Naive thymus-derived CD4-positive, alpha-beta T cell (primary cell): ENCODE measurements at regions of chr7 and their contacts with region 1.

Region 1: DNA sequence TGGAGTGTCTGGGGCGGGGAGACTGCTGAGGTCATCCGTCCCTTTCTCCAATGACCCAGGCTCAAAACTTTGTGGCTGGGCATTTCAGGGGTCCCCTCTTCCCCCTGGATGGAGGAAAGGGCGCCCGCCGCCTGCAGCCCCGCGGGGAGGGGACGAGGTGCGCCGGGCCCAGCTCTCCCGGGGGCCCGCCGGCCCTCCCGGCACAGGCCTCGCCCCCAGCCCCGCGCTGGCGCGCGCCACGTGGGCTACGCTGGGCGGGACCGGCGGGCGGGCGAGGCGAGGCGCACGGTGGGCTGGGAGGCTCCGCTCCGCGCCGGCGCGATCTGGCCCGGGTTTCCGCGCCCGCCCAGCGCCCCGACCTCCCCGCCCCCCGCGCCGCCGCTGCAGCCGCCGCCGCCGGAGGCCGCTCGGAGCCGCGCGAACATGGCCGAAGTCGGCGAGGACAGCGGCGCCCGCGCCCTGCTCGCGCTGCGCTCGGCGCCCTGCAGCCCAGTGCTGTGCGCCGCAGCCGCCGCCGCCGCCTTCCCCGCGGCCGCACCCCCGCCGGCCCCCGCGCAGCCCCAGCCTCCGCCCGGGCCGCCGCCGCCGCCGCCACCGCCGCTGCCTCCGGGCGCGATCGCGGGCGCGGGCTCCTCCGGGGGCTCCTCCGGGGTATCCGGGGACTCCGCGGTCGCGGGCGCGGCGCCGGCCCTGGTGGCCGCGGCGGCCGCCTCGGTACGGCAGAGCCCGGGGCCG is at the start of gene FOXK1:
- DNase-seq: peak; percentile 69 to 87 (median 79)
- ATAC-seq: peak; percentile 92
- H3K4me3 ChIP-seq: peak within 1 kb of the TSS; percentile 75
- H3K4me3 Mint-ChIP-seq: peak within 1 kb of the TSS; percentile 90 to 100 (median 97)
- H3K27ac ChIP-seq: peak within 1 kb of the TSS; percentile 92
- H3K27ac Mint-ChIP-seq: peak within 1 kb of the TSS; percentile 68 to 99 (median 97)
- H3K4me1 ChIP-seq: peaks cover 13 to 28% of the 10 kb centered on the region in 2 donors
- H3K4me1 Mint-ChIP-seq: peaks cover 24 to 41% (median 31%) of the 10 kb centered on the region in 7 donors
- H3K27me3 ChIP-seq: no peaks in the 10 kb centered on the region
- H3K27me3 Mint-ChIP-seq: no peaks in the 10 kb centered on the region
- total RNA-seq, gene FOXK1: 37.7 to 69.0 (median 56.9) TPM

Region 2: DNA sequence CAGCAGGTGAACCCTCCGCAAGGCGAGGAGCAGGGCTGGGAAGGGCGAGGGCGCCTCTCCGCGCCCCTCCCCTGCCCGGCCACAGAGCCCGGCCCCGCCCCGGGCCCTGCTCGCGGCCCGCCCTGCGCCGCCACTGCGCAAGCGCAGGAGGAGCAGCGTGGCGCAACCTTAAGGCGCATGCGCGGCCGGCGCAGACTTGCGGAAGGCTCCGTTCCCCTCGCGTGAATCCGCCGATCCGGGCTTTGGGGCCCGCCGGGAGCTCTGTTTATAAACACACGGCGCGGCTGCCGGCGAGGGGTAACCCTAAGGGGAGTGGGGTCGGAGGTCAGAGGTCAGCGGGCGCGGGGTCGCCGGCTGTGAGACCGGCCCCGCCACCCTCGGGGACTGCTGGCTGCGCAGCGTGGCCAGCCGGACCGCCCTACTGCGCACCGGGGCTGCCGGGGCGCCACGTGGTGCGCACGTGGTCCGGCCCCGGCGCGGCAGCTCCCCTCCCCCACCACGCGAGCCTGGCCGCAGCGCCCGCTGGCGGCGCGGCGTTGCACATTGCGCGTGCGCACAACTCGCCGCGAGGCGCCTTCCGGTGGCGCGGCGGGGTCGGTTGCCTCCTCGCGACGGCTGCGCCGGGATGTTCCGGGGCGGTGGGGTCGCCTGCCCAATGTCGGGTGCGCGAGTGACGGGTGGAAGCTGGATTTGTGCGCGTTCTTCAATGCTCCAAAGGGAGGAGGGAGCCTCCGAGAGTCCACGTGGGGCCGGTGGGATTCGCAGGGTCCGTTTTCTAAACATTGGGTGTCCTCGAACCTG is 40.2 kb before region 1 on chr7:
- CTCF ChIA-PET with region 1: interaction called, 13 read pairs
- POLR2A ChIA-PET with region 1: interaction called, 113 read pairs
- intact Hi-C with region 1: loop called (anchors 1 kb)
- DNase-seq: peak; percentile 94 to 99 (median 98)
- ATAC-seq: peak; percentile 92
- H3K4me3 ChIP-seq: peak overlapping the region; percentile 85
- H3K4me3 Mint-ChIP-seq: peak overlapping the region; percentile 73 to 94 (median 90)
- H3K27ac ChIP-seq: peak overlapping the region; percentile 87
- H3K27ac Mint-ChIP-seq: peak overlapping the region; percentile 89 to 99 (median 97)
- H3K4me1 ChIP-seq: peaks cover 7 to 10% of the 10 kb centered on the region in 2 donors
- H3K4me1 Mint-ChIP-seq: peaks cover 5 to 26% (median 13%) of the 10 kb centered on the region in 7 donors
- H3K27me3 ChIP-seq: no peaks in the 10 kb centered on the region
- H3K27me3 Mint-ChIP-seq: no peaks in the 10 kb centered on the region

Region 3: DNA sequence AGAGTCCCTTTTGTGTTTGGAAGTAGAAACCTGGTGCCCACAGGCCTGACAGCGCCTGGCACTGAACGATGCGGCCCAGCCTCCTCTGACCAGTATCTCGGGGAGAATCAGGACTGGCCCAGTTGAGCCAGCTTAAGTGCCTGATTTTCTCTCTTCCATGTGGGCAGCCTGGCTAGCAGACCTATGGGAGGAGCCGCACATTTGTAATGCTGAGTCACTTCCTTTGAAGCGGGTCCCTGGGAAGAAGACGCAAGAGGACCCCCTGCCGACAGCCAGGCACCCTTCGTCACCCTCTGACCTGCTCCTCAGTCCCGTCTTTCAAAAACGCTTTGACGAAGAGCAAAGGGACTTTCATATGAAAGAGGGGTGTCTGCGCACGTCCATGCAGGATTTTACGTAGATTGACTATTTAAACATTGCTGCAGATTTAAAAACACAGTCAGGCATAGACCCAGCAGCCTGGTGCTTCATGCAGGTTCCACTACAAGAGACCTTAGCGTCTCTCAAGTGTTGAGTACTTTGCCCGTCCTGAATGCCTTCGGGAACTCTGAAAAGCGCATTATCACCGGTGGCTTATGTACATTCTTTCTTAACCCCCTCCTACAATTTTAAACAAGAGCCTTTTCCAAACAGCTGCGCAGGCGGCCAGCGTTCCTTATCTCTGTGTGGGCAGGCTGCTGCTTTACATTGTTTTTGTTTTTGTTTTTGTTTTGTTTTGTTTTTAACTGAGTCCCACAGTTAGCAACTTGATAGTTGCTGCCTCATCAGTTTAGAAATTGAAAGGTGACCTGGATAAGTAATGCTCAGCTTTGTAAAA is 56.9 kb after region 1 on chr7:
- CTCF ChIA-PET with region 1: interaction called, 3 read pairs
- POLR2A ChIA-PET with region 1: interaction called, 5 read pairs
- intact Hi-C with region 1: loop called (anchors 1 kb)
- DNase-seq: peak in 3 of 9 donors; percentile 39 to 65 (median 40)
- ATAC-seq: peak; percentile 47
- H3K4me3 ChIP-seq: peak overlapping the region; percentile 22
- H3K4me3 Mint-ChIP-seq: peak overlapping the region; percentile 66 to 87 (median 82)
- H3K27ac ChIP-seq: peak overlapping the region; percentile 65
- H3K27ac Mint-ChIP-seq: peak overlapping the region; percentile 69 to 98 (median 91)
- H3K4me1 ChIP-seq: peaks cover 2 to 37% of the 10 kb centered on the region in 2 donors
- H3K4me1 Mint-ChIP-seq: peaks cover 34 to 78% (median 70%) of the 10 kb centered on the region in 7 donors
- H3K27me3 ChIP-seq: no peaks in the 10 kb centered on the region
- H3K27me3 Mint-ChIP-seq: no peaks in the 10 kb centered on the region

Region 4: GRCh38 chr7:4753711-4754432 is 71.8 kb after region 1 on chr7:
- CTCF ChIA-PET with region 1: no interaction called
- POLR2A ChIA-PET with region 1: interaction called, 6 read pairs
- intact Hi-C with region 1: loop called (anchors 1 kb)
- DNase-seq: peak; percentile 67 to 90 (median 83)
- ATAC-seq: peak; percentile 97
- H3K4me3 ChIP-seq: no peak overlapping the region
- H3K4me3 Mint-ChIP-seq: peak overlapping the region in 4 of 10 donors; percentile 4 to 45 (median 19)
- H3K27ac ChIP-seq: peak overlapping the region; percentile 33
- H3K27ac Mint-ChIP-seq: peak overlapping the region in 3 of 9 donors; percentile 75 to 83 (median 81)
- H3K4me1 ChIP-seq: peaks cover 4 to 20% of the 10 kb centered on the region in 2 donors
- H3K4me1 Mint-ChIP-seq: peaks cover 4 to 41% (median 21%) of the 10 kb centered on the region in 7 donors
- H3K27me3 ChIP-seq: no peaks in the 10 kb centered on the region
- H3K27me3 Mint-ChIP-seq: no peaks in the 10 kb centered on the region

Region 5: DNA sequence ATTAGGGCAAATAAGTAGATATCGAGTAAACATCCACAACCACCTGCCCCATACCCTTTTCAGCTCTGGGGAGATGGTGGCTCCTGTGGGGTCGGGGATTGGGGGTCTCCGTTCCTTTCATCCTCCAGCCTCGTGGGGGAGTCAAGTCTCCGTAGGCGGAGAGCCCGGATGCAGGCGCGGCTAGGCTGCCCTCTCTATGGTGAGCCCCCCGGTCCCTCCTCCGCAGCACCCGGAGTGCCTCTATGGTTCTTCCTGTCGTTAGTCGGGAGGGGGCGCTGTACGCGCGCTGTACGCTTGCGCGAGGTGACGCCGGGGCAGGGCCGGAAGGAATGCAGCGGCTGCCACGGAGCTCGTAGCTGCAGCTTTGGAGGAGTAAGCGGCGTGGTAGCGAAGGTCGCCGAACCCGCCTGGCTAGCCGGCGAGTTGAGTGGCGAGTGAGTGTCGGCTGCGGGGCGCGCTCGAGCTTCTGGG is 291.7 kb after region 1 on chr7:
- CTCF ChIA-PET with region 1: no interaction called
- POLR2A ChIA-PET with region 1: no interaction called
- intact Hi-C with region 1: loop called in 1 of 2 experiments (anchors 2 kb)
- DNase-seq: peak; percentile 89 to 99 (median 95)
- ATAC-seq: peak; percentile 99
- H3K4me3 ChIP-seq: peak overlapping the region; percentile 68
- H3K4me3 Mint-ChIP-seq: peak overlapping the region; percentile 85 to 100 (median 98)
- H3K27ac ChIP-seq: peak overlapping the region; percentile 78
- H3K27ac Mint-ChIP-seq: peak overlapping the region; percentile 90 to 99 (median 95)
- H3K4me1 ChIP-seq: peaks cover 4 to 9% of the 10 kb centered on the region in 2 donors
- H3K4me1 Mint-ChIP-seq: peaks cover 22 to 44% (median 33%) of the 10 kb centered on the region in 7 donors
- H3K27me3 ChIP-seq: no peaks in the 10 kb centered on the region
- H3K27me3 Mint-ChIP-seq: peaks cover 0 to 2% (median 0%) of the 10 kb centered on the region in 5 donors

Region 6: GRCh38 chr7:5200561-5201270 is 518.7 kb after region 1 on chr7:
- CTCF ChIA-PET with region 1: no interaction called
- POLR2A ChIA-PET with region 1: no interaction called
- intact Hi-C with region 1: no loop called
- DNase-seq: no peak
- ATAC-seq: no peak
- H3K4me3 ChIP-seq: no peak overlapping the region
- H3K4me3 Mint-ChIP-seq: no peak overlapping the region
- H3K27ac ChIP-seq: no peak overlapping the region
- H3K27ac Mint-ChIP-seq: no peak overlapping the region
- H3K4me1 ChIP-seq: no peaks in the 10 kb centered on the region
- H3K4me1 Mint-ChIP-seq: peaks cover under 1 to 33% (median 11%) of the 10 kb centered on the region in 7 donors
- H3K27me3 ChIP-seq: no peaks in the 10 kb centered on the region
- H3K27me3 Mint-ChIP-seq: no peaks in the 10 kb centered on the region